PC-3 (cell line): ENCODE measurements at regions of chr1 and their contacts with region 1.

Region 1: DNA sequence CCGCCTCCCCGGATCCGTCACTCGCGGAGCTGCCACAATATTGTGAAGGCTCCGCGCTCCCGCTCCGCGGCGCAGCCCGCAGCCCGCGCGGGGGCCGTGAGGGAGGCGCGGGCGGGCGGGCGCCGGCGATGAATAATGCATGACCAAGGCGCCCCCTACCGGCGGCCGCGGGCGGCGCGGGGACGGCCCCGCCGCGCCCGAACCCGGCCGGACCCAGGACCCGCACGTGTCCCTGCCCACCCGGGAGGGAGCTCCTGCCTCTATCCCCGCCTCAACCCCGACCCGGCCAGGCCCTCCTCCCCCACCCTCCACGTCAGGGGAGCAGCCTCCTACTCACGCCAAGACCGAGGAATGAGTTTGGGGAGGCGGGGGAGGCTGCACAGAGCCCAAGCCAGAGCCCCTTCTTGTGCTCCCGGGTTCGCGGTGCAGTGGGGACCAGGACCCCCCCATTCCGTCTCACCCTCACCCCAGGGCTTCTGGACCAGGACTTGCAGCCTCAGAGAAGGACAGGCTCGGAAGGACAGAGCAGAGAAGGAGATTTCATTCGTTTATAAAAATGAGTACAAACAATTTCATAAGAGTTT is 70.8 kb upstream of the CASZ1 start:
- DNase-seq: peak; percentile 69
- ATAC-seq: peak; percentile 88
- H3K4me3 ChIP-seq: peak overlapping the region; percentile 67
- H3K27ac ChIP-seq: no peak overlapping the region
- H3K4me1 ChIP-seq: peaks cover 4% of the 10 kb centered on the region; the same call in 1 of the 2 replicates
- H3K27me3 ChIP-seq: no peaks in the 10 kb centered on the region
- CTCF ChIP-seq: peak; percentile 52

Region 2: DNA sequence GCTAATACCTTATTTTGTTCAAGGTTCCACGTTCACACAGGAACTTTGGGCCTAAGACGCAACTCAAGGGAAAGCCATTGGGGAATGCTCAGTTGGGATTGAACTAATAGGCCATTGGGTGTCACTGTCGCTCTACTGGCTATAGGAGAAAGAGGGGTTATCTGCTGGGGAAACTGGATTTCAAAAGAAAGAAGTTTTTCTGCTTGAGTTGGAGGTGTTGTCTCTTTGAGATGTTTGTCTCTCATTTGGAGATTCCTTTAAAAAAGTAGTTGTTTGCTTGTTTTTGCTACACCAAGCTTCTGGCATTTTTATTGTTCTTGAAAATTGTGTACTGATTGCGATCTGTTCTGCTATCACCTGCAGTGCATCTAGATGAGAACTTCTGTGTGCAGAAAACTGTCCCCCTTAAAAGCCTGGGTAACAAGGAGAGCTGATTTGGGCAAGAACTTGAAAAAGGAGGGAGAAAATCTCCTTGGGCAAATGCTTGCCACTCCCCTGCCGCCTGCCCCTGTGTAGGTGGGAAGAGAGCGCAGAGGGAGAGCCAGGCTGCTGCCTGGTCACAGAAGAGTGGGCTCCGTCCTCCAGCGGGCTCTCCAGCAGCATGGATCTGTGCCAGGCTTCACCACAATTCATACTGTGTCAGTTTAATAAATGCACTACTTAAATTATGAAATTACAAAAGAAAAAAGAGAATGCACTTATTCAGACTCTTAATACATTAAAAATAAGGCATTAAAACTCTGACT is 352.6 kb before region 1 on chr1:
- CTCF ChIA-PET with region 1: no interaction called
- POLR2A ChIA-PET with region 1: no interaction called
- intact Hi-C with region 1: loop called (anchors 1 kb)
- DNase-seq: peak; percentile 64
- ATAC-seq: no peak
- H3K4me3 ChIP-seq: no peak overlapping the region
- H3K27ac ChIP-seq: no peak overlapping the region
- H3K4me1 ChIP-seq: peaks cover 47% of the 10 kb centered on the region
- H3K27me3 ChIP-seq: no peaks in the 10 kb centered on the region
- CTCF ChIP-seq: peak; percentile 78

Region 3: GRCh38 chr1:10561955-10562354 is 305.3 kb before region 1 on chr1:
- CTCF ChIA-PET with region 1: no interaction called
- POLR2A ChIA-PET with region 1: no interaction called
- intact Hi-C with region 1: no loop called
- DNase-seq: no peak
- ATAC-seq: no peak
- H3K4me3 ChIP-seq: no peak overlapping the region
- H3K27ac ChIP-seq: no peak overlapping the region
- H3K4me1 ChIP-seq: no peaks in the 10 kb centered on the region
- H3K27me3 ChIP-seq: no peaks in the 10 kb centered on the region
- CTCF ChIP-seq: peak; percentile 44; the same call in 1 of the 2 replicates

Region 4: GRCh38 chr1:10694633-10695627 is 172.3 kb before region 1 on chr1:
- CTCF ChIA-PET with region 1: no interaction called
- POLR2A ChIA-PET with region 1: no interaction called
- intact Hi-C with region 1: loop called (anchors 2 kb)
- DNase-seq: peak; percentile 86
- ATAC-seq: peak; percentile 75
- H3K4me3 ChIP-seq: peak overlapping the region; percentile 63
- H3K27ac ChIP-seq: no peak overlapping the region
- H3K4me1 ChIP-seq: peaks cover 29% of the 10 kb centered on the region
- H3K27me3 ChIP-seq: no peaks in the 10 kb centered on the region
- CTCF ChIP-seq: no peak

Region 5: DNA sequence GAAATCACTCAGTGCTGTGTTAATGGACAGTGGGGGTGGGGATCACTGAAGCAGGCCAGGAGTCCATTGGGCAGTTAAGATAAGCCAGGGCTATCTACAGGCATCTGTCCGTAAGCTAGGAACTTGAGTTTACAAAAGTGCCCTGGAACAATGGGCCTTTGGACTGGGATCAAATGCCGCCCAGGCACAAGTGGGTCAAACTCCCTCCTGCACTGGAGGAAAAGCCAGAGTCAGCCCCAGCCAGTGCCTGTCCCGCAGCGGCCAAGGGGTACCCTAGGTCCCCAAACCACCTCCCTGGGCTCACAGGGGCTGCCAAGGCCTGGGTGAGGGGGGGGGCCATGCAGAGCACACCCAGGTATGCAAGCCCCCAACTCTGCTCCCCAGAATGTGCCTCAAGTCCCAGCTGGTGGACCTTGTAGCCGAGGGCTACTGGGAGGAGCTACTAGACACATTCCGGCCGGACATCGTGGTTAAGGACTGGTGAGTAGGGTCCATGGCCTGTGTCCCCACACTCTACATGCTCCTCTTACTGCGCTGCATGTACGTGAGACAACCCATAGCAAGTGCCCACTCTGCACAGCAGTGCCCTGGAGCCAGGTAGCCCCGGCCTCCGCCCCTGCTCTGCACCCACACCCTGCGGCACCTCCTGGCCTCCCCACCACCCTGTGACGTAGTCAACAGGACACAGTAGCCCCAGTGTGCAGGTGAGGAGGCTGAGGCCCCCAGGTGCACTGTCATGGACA is 804.5 kb after region 1 on chr1:
- CTCF ChIA-PET with region 1: no interaction called
- POLR2A ChIA-PET with region 1: no interaction called
- intact Hi-C with region 1: no loop called
- DNase-seq: no peak
- ATAC-seq: no peak
- H3K4me3 ChIP-seq: no peak overlapping the region
- H3K27ac ChIP-seq: no peak overlapping the region
- H3K4me1 ChIP-seq: no peaks in the 10 kb centered on the region
- H3K27me3 ChIP-seq: no peaks in the 10 kb centered on the region
- CTCF ChIP-seq: no peak